ENCODE measurements at regions of chr16 and their contacts with region 1.

Region 1: DNA sequence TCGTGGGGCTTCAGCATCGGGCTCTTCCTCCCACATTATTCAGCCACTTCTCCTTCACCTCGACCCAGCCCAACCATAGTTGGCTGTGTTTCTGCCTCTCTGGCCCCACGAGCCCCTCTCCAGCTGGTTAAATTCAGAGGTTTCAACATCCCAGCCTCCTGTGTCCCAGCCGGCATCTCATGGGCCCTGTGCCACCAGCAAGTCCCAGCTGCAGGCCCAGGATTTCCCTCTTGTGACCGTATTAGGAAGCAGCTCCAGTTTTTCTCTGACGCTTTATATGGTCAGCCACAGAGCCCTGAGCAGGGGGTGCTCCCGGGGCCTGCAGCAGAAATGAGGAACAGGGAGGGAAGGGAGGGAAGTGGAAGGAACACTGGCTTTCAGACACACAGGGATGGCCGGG is 27.4 kb downstream of the MYH11 start:
- DNase-seq: peak in 1 of 6 donors; percentile 11
- ATAC-seq: peak in 3 of 4 donors; percentile 43 to 71 (median 47)
- H3K4me3 ChIP-seq: no peak overlapping the region
- H3K27ac ChIP-seq: no peak overlapping the region
- H3K4me1 ChIP-seq: no peaks in the 10 kb centered on the region
- H3K27me3 ChIP-seq: no peaks in the 10 kb centered on the region
- CTCF ChIP-seq: no peak

Region 2: DNA sequence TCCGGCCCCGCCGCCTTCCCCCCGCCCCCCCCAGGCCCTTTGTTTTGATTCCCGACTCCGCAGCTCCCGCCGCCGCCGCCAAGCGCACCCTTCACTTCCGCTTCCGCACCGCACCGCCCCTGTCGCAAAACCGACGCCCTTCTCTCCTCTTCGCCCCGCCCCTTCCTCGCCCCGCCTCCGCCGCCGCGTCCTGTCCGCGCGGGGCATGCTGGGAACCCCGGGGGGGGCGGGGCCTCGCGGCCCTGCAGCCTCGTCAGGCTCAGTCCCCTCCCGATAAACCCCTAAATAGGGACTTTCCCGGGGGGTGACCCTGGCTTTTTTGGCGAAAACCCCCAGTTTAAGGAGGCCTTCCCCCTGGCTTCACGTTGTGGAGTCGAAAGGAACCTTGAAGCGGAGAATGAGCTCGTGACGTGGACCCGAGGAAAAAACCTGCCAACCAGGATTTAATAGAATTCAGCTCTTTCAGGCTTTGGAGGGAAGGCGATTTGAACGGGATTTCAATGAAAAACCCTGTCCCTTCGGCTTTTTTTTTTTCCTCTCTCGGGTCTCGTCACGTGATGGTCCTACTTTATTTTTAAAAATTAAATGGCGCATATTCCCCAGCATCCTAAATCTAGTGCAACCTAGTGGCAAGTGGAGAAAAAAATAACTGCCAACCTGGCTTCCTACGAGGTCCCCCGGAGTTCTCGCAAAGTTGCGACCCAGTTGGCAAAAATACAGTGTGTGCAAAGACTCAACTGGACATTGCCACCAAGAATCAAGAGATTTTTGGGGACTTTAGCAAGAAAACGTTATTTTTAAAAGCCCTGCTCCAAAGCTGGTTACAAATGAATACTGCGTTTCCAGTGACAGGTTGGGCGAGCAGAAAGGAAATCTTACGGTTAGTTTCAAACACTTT is 186.2 kb before region 1 on chr16 and contains the start of gene MARF1:
- intact Hi-C with region 1: no loop called
- DNase-seq: peak; percentile 99 to 100 (median 99)
- ATAC-seq: peak; percentile 94 to 98 (median 96)
- H3K4me3 ChIP-seq: peak within 1 kb of the TSS; percentile 77 to 92 (median 88)
- H3K27ac ChIP-seq: peak within 1 kb of the TSS; percentile 93 to 99 (median 97)
- H3K4me1 ChIP-seq: peaks cover 16 to 23% (median 19%) of the 10 kb centered on the region in 3 donors
- H3K27me3 ChIP-seq: no peaks in the 10 kb centered on the region
- CTCF ChIP-seq: peak in 3 of 4 donors; percentile 8 to 25 (median 21)
- total RNA-seq, gene MARF1: 31.7 to 65.3 (median 45.4) TPM

Region 3: DNA sequence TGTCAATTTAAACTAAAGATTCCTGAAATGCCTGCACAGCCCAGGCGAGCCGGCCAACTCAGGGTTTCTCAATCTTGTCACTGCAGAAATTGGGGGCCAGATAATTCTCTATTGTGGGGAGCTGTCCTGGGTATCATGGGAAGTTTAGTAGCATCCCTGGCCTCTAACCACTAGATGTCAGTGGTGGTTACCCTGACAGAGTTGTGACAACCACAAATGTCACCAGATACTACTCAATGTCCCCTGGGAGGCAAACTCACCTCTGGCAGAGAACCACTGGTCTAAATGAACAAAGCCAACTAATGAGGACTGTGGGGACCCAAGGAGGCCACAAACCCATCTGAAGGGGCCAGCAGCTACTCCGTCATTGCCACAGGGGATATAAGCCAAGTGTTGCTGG is 63.6 kb before region 1 on chr16:
- intact Hi-C with region 1: loop called in 2 of 3 experiments (anchors 10 kb)
- DNase-seq: peak in 2 of 6 donors; percentile 7 to 22
- ATAC-seq: peak; percentile 70 to 94 (median 88)
- H3K4me3 ChIP-seq: no peak overlapping the region
- H3K27ac ChIP-seq: no peak overlapping the region
- H3K4me1 ChIP-seq: no peaks in the 10 kb centered on the region
- H3K27me3 ChIP-seq: no peaks in the 10 kb centered on the region
- CTCF ChIP-seq: peak; percentile 22 to 53 (median 43)

Region 4: DNA sequence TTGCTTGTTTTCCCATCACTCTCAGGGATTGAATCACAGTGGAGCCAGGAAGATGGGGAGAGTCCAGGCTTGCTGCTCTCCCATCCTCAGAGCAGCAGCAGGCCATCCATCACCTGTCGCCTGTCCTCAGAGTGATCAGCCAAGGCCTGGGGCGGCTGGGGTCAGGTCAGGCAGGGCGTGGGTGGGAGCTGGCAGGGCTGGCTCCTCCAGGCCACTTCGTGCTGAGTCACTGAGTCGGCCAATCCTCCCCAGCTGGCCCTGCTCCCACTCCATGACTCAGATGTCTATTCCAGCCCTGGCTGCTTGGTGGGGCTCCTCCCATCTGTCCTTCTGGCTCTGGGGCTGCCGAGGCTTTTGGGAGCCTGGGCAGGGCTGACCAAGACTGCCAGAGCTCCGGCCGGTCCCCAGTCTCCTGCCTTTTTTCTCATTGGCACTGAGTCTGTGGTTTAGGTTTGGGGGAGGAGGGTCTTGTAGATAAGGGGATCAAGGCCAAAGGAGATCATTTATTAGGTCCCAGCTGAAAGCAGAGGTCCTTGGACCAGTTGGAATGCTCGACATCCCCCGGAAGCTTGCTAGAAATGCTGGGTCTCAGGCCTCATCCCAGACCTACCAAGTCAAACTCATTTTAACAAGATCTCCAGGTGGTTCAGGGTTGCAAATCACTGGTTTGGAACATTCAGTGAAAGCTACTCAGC is 192.7 kb after region 1 on chr16:
- intact Hi-C with region 1: no loop called
- DNase-seq: peak; percentile 89 to 96 (median 94)
- ATAC-seq: peak; percentile 98 to 100 (median 99)
- H3K4me3 ChIP-seq: no peak overlapping the region
- H3K27ac ChIP-seq: peak overlapping the region in 3 of 4 donors; percentile 24 to 40 (median 34)
- H3K4me1 ChIP-seq: peaks cover 13 to 17% (median 13%) of the 10 kb centered on the region in 3 donors
- H3K27me3 ChIP-seq: no peaks in the 10 kb centered on the region
- CTCF ChIP-seq: no peak

Region 5: GRCh38 chr16:16042076-16042475 is 212.6 kb after region 1 on chr16:
- intact Hi-C with region 1: no loop called
- DNase-seq: no peak
- ATAC-seq: peak in 1 of 4 donors; percentile 34
- H3K4me3 ChIP-seq: no peak overlapping the region
- H3K27ac ChIP-seq: no peak overlapping the region
- H3K4me1 ChIP-seq: no peaks in the 10 kb centered on the region
- H3K27me3 ChIP-seq: no peaks in the 10 kb centered on the region
- CTCF ChIP-seq: no peak

Measured in pancreas (tissue), 10 donors.